ENCODE measurements at regions of chr5 and their contacts with region 1.

Region 1: GRCh38 chr5:151651997-151652645 is 34.6 kb downstream of the SPARC start:
- DNase-seq: peak; percentile 76
- H3K4me3 ChIP-seq: no peak overlapping the region
- H3K27ac ChIP-seq: no peak overlapping the region
- H3K4me1 ChIP-seq: peaks cover 12% of the 10 kb centered on the region
- H3K27me3 ChIP-seq: no peaks in the 10 kb centered on the region
- CTCF ChIP-seq: peak; percentile 98 to 99

Region 2: DNA sequence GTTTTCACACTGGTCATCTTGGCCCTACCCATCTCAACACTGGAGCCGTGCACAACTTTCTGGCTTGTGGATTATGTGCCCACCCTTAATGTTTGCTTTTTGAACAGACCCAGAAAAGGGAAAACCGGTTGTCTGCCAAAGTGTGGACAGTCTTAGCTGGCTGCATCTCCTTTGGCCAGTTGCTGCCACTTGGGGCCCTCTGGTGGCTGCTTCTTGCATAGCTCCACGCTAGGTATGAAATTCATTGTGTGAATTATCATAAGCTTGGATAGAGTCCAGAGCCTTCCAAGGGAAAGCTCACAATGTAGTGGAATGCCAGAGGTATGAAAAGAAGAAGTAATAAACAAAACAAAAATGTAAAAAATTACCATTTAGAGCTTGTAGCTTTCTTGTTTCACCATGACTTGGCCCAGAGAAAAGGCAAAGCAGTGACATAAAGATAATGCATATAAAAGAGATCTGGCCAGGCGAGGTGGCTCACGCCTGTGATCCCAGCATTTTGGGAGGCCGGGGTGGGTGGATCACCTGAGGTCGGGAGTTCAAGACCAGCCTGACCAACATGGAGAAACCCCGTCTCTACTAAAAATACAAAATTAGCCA is 336.0 kb before region 1 on chr5:
- CTCF ChIA-PET with region 1: no interaction called
- dilution Hi-C with region 1: no loop called
- in situ Hi-C with region 1: no loop called
- intact Hi-C with region 1: loop called (anchors 2 kb)
- DNase-seq: peak; percentile 55
- H3K4me3 ChIP-seq: no peak overlapping the region
- H3K27ac ChIP-seq: no peak overlapping the region
- H3K4me1 ChIP-seq: no peaks in the 10 kb centered on the region
- H3K27me3 ChIP-seq: no peaks in the 10 kb centered on the region
- CTCF ChIP-seq: peak; percentile 96 to 98

Region 3: DNA sequence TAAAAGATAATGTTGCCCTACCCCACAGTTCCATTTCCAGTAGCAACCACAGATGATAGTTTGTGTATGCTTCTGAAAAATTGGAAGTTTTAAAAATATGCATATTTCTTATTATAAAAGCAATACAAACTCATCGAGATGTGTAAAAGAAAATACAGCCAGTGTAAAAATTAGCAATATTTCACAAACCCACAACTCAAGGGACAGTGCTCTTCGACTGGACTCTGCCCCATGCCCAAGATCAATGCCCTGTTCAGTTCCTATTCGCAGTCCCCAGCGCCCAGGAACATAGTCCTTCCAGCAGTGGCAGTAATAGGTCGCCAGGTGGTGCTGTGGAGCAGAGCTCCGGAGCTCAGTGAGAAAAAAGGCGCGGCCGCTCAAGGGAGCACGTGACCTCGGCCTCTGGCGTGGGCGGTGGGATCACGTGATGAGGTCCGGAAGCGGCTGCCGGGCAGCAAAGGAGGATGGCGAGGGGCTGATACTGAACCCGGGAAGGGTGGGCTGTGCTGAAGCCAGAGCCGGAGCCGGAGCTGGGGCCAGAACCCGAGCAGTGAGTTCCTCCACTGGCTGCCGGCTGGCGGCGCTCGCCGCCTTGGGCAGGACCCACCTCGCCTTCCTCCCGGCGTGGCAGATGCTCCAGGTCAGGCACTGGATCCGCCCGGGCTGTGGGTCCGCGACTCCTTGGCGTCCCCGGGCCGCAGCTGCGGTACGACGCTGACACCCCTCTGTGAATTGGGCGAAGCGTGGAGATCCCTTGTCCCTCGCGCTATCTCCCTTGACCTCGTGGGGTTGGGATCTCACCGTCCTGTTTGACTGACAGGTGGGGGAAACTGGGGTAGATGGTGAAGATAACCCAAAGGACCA is 204.7 kb before region 1 on chr5 and contains the start of gene SLC36A1:
- CTCF ChIA-PET with region 1: interaction called, 3 read pairs
- dilution Hi-C with region 1: no loop called
- in situ Hi-C with region 1: no loop called
- intact Hi-C with region 1: loop called (anchors 1 kb)
- DNase-seq: peak; percentile 83
- H3K4me3 ChIP-seq: peak within 1 kb of the TSS; percentile 56 to 77 (median 77)
- H3K27ac ChIP-seq: peak within 1 kb of the TSS; percentile 20
- H3K4me1 ChIP-seq: peaks cover 13% of the 10 kb centered on the region
- H3K27me3 ChIP-seq: peaks cover 2% of the 10 kb centered on the region
- CTCF ChIP-seq: peak; percentile 93 to 94
- total RNA-seq, gene SLC36A1: 9.7 to 11.0 TPM

Region 4: GRCh38 chr5:151523335-151523734 is 128.8 kb before region 1 on chr5:
- CTCF ChIA-PET with region 1: no interaction called
- dilution Hi-C with region 1: no loop called
- in situ Hi-C with region 1: no loop called
- intact Hi-C with region 1: loop called (anchors 1 kb)
- DNase-seq: peak; percentile 59
- H3K4me3 ChIP-seq: no peak overlapping the region
- H3K27ac ChIP-seq: no peak overlapping the region
- H3K4me1 ChIP-seq: no peaks in the 10 kb centered on the region
- H3K27me3 ChIP-seq: no peaks in the 10 kb centered on the region
- CTCF ChIP-seq: peak; percentile 61 to 63

Region 5: DNA sequence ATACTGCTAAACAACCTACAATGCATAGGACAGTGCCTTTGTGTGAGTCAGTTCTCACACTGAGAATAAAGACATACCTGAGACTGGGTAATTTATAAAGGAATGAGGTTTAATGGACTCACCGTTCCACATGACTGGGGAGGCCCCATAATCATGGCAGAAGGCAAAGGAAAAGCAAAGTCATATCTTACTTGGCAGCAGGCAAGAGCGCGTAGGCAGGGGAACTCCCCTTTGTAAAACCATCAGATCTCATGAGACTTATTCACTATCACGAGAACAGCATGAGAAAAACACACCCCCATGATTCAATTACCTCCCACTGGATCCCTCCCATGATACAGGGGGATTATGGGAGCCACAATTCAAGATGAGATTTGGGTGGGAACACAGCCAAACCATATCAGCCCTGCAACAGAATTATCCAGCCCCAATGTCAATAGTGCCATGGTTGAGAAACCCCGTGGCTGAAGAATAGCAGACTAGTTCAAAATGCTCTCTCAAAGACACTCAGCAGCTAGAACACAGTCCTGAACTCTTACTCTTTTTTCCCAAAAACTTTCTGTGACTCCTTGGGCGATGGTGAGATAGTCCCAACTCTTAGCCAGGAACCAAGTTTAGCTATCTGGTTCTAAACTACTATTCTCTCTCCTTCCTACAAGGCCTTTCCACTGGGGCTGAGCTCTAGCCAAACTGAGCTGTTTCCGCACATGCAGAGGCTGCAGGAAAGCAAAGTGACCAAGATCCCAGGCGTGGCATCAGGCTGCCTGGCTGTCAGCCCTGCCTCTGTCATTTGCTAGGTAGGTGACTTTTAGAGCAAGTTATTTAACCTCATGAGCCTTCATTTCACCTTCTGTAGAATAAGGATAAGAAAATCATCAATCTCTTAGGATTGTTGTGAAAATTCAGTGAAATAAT is 82.7 kb before region 1 on chr5:
- CTCF ChIA-PET with region 1: interaction called, 4 read pairs
- dilution Hi-C with region 1: no loop called
- in situ Hi-C with region 1: loop called in 1 of 2 experiments (anchors 5 kb)
- intact Hi-C with region 1: loop called (anchors 1 kb)
- DNase-seq: peak; percentile 83
- H3K4me3 ChIP-seq: no peak overlapping the region
- H3K27ac ChIP-seq: peak overlapping the region; percentile 83
- H3K4me1 ChIP-seq: peaks cover 55% of the 10 kb centered on the region
- H3K27me3 ChIP-seq: no peaks in the 10 kb centered on the region
- CTCF ChIP-seq: no peak

Region 6: GRCh38 chr5:151592855-151593408 is 59.2 kb before region 1 on chr5:
- CTCF ChIA-PET with region 1: interaction called, 3 read pairs
- dilution Hi-C with region 1: no loop called
- in situ Hi-C with region 1: no loop called
- intact Hi-C with region 1: loop called (anchors 1 kb)
- DNase-seq: no peak
- H3K4me3 ChIP-seq: no peak overlapping the region
- H3K27ac ChIP-seq: no peak overlapping the region
- H3K4me1 ChIP-seq: peaks cover 62% of the 10 kb centered on the region
- H3K27me3 ChIP-seq: no peaks in the 10 kb centered on the region
- CTCF ChIP-seq: no peak

Region 7: GRCh38 chr5:151719228-151720000 is 67.3 kb after region 1 on chr5:
- CTCF ChIA-PET with region 1: no interaction called
- dilution Hi-C with region 1: loop called (anchors 5 kb)
- in situ Hi-C with region 1: no loop called
- intact Hi-C with region 1: no loop called
- DNase-seq: no peak
- H3K4me3 ChIP-seq: no peak overlapping the region
- H3K27ac ChIP-seq: no peak overlapping the region
- H3K4me1 ChIP-seq: peaks cover 12% of the 10 kb centered on the region
- H3K27me3 ChIP-seq: no peaks in the 10 kb centered on the region
- CTCF ChIP-seq: peak; percentile 51 to 70

Measured in mammary epithelial cell (primary cell).